Posterior cingulate gyrus (tissue), 11 donors: ENCODE measurements at regions of chr11 and their contacts with region 1.

Region 1: DNA sequence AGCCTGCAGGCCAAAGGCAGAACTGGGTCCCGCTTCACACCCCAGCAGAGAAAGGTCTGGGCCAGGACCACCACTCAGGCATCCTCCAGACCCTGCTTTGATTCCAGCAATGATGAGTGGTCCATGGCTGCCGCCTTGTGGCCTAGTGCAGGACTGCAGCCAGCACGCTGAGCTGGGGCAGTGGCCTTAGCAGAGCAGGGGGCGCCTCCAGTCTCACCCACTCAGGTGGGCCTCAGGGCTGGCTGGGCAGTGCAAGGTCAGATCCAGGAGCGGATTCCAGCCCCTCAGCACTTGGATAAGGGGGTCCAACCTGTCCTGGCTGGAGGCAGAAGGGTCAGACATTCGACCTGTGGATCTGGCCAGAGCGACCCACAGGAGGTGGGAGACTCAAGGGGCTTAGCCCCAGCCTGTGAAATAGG is 9.6 kb upstream of the PDE2A start:
- DNase-seq: peak; percentile 59 to 95 (median 82)

Region 2: DNA sequence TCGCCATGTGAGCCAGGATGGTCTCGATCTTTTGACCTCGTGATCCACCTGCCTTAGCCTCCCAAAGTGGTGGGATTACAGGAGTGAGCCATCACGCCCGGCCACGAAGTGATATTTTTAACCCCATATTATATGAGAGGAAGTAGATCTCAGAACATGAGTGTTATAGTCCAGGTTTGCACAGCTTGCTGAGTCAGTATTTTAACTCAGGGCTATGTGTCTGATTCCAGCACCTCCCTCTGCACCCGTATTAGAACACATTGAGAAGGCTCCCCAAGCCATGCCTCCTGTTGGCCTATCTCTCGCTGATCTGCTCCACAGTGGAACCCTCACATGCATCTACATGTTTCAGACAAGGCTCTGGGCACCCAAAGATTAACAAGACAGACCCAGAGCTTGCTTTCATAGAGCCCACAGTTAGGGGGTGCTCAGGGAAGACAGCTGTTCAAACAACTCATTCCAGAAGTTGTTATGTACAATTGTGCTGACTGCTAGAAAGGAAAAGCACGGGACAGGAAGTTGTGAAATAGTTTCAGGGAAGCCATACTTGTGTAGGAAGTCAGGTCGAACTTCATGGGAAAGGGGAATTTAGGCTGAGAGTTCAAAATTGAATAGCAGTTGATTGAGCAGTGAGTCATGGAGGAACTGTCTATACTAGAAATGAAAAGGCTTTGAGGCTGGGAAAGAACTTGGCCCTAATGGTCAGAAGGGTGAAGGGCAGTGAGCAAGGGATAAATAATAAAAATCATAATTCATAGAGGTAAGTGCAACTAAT is 200.2 kb before region 1 on chr11:
- intact Hi-C with region 1: loop called (anchors 5 kb)
- DNase-seq: no peak

Region 3: GRCh38 chr11:72585762-72586311 is 98.0 kb before region 1 on chr11:
- intact Hi-C with region 1: loop called (anchors 1 kb)
- DNase-seq: peak in 8 of 10 donors; percentile 37 to 93 (median 66)